ENCODE measurements at regions of chr5 and their contacts with region 1.

Region 1: GRCh38 chr5:5558638-5559037 is 136.2 kb downstream of the ICE1 start:
- DNase-seq: no peak
- H3K4me3 ChIP-seq: no peak overlapping the region
- H3K27ac ChIP-seq: no peak overlapping the region
- H3K4me1 ChIP-seq: no peaks in the 10 kb centered on the region
- H3K27me3 ChIP-seq: no peaks in the 10 kb centered on the region
- CTCF ChIP-seq: no peak
- EP300 ChIP-seq: no peak
- POLR2A ChIP-seq: no peak

Region 2: GRCh38 chr5:5266296-5266695 is 292.3 kb before region 1 on chr5:
- intact Hi-C with region 1: no loop called
- DNase-seq: no peak
- H3K4me3 ChIP-seq: no peak overlapping the region
- H3K27ac ChIP-seq: no peak overlapping the region
- H3K4me1 ChIP-seq: peaks cover 2% of the 10 kb centered on the region
- H3K27me3 ChIP-seq: no peaks in the 10 kb centered on the region
- CTCF ChIP-seq: no peak
- EP300 ChIP-seq: no peak
- POLR2A ChIP-seq: no peak

Region 3: DNA sequence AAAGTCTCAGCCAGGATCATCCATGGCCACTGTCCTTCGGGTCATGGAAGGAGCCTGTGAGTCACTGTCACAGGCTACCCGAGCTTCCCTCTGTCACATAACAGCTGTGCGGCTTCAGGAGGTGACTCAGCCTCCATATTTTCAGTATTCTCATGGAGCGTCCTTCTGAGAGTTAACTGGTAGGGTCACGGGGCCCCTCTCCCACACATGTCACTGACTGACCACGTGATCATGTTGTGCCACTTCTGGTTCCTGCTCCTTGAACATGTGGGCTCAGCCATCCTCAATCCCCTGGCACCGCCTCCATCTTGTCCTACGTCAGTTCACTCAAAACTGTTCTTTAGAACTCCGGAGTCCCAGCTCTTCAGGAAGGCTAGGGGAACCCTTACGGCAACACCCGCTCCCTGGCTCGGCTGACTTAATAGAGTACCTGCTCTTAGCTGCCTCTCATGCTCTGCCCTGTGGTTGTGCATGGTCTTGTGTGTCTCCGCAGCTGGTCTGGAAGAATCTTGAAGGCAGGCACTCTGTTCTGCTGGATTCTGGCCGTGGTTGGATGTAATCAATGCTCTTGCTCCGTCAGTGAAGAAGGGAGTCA is 46.6 kb after region 1 on chr5:
- intact Hi-C with region 1: no loop called
- DNase-seq: no peak
- H3K4me3 ChIP-seq: no peak overlapping the region
- H3K27ac ChIP-seq: no peak overlapping the region
- H3K4me1 ChIP-seq: no peaks in the 10 kb centered on the region
- H3K27me3 ChIP-seq: no peaks in the 10 kb centered on the region
- CTCF ChIP-seq: no peak
- EP300 ChIP-seq: no peak
- POLR2A ChIP-seq: no peak

Region 4: GRCh38 chr5:7039074-7039473 is 1480.4 kb after region 1 on chr5:
- intact Hi-C with region 1: loop called in 1 of 4 experiments (anchors 10 kb)
- DNase-seq: no peak
- H3K4me3 ChIP-seq: no peak overlapping the region
- H3K27ac ChIP-seq: no peak overlapping the region
- H3K4me1 ChIP-seq: no peaks in the 10 kb centered on the region
- H3K27me3 ChIP-seq: no peaks in the 10 kb centered on the region
- CTCF ChIP-seq: no peak
- EP300 ChIP-seq: no peak
- POLR2A ChIP-seq: no peak

Measured in ovary (tissue), 10 donors.